Common myeloid progenitor, CD34-positive (primary cell): ENCODE measurements at regions of chr1 and their contacts with region 1.

Region 1: GRCh38 chr1:110203021-110203661 is 7.0 kb upstream of the KCNC4 start:
- DNase-seq: peak; percentile 76 to 89 (median 82)
- H3K4me3 ChIP-seq: no peak overlapping the region
- H3K27ac ChIP-seq: no peak overlapping the region
- H3K4me1 ChIP-seq: no peaks in the 10 kb centered on the region
- H3K27me3 ChIP-seq: no peaks in the 10 kb centered on the region

Region 2: DNA sequence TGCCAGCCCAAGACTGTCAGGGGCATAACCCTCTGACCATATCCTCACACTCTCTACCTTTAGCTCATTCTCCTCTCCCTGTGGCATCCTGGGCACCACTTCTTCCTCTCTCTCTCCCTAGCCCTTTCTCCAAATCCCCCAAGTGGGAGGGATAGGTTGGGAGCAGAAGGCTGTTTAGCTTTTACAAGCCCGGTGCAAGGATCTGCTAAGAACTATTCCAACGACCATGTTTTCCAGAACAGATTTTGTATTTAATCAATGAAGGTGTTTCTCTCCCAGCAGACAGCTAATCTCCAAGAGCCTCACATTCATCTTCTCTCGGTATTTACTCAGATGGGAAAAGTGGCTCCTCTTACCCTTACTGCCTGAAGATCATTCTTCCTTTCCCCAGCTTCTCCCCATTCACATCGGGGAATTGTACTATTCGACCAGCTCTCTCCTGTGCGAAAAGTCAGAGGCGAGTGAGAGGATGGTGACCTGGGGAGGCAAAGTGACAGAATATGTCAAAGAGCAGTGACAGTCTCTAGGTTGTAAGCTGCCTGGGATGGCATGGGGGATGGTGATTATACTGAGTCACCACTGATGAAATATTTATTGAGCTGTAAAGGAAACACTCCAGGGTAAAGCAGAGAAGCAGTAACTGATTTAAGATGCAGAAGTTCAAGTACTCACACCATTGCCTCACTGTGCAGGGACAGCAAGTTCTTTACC is 89.0 kb after region 1 on chr1:
- CTCF ChIA-PET with region 1: interaction called, 14 read pairs
- POLR2A ChIA-PET with region 1: no interaction called
- DNase-seq: peak in 2 of 3 donors; percentile 6
- H3K4me3 ChIP-seq: no peak overlapping the region
- H3K27ac ChIP-seq: no peak overlapping the region
- H3K4me1 ChIP-seq: no peaks in the 10 kb centered on the region
- H3K27me3 ChIP-seq: no peaks in the 10 kb centered on the region

Region 3: DNA sequence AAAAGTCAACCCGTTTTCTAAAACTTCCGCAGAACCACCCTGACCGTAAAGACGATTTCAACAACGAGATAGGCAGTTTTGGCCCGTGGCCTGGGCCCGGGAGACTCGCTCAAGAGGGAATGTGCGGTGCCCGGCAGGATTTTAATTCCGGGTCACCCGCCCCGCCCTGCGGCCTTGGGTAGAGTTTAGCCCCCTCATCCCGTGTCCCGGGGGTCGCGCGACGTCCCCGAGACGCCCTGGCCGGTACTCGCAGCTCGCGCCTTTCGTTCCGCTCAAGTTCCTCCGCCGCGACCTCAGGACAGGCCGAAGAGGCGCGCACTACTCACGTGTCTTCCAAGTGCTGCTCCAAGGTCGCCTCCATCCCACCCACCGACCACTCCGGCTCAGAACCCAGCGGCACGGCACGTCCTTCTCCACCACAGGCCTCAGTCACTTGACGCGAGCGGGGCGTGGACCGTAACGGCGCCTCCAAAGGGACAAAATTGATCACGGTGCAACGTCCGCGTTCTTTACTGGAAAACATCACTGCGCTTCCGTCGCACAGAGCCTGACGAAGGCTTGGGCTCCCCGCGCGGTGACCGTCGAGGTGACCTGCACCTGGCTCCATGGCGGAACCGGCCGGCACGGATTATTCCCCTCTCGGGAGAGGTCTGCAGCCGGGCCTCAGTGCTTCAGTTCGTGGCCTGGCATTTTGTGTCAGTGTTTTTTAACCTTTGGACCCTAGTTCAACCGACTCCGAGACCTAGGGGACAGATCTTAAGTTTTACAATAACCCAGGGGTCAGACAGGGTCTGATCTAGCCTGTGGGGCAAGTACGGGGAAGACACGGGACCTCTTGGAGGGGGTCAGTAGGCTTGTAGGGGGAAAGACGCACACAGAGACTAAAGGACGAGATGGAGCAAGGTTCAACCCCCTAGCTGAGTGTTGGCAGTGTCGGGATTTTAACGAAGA is 204.4 kb after region 1 on chr1 and contains the start of gene LAMTOR5:
- CTCF ChIA-PET with region 1: interaction called, 19 read pairs
- POLR2A ChIA-PET with region 1: no interaction called
- DNase-seq: peak; percentile 95 to 97 (median 97)
- H3K4me3 ChIP-seq: peak within 1 kb of the TSS; percentile 84 to 98 (median 93)
- H3K27ac ChIP-seq: peak within 1 kb of the TSS; percentile 89 to 94
- H3K4me1 ChIP-seq: peaks cover 12 to 22% (median 14%) of the 10 kb centered on the region in 4 experiments
- H3K27me3 ChIP-seq: no peaks in the 10 kb centered on the region